Transverse colon (tissue), 4 donors: ENCODE measurements at regions of chr4 and their contacts with region 1.

Region 1: DNA sequence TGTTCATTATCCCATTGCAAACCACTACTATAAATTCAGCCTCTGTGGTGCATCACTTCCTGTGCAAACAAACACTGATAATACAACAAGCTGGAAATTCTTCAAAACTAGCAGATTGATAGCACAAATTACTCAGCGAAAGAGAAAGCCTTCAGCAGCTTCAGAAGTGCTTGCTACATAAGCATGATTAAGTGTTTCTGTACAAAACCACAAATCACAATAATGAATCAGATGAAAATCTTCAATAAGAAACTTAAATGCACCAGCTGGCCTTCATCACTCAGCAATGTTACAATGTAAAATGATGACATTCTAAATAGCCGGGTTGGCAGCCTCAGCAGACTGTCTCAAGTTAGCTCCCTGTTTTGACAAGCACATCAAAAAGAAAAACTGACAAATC is 262.2 kb downstream of the SPOCK3 start:
- DNase-seq: no peak
- H3K4me3 ChIP-seq: no peak overlapping the region
- H3K27ac ChIP-seq: no peak overlapping the region
- H3K4me1 ChIP-seq: no peaks in the 10 kb centered on the region
- H3K27me3 ChIP-seq: no peaks in the 10 kb centered on the region
- CTCF ChIP-seq: no peak
- EP300 ChIP-seq: no peak
- POLR2A ChIP-seq: no peak

Region 2: GRCh38 chr4:166994686-166995085 is 22.6 kb after region 1 on chr4:
- in situ Hi-C with region 1: no loop called
- intact Hi-C with region 1: loop called (anchors 1 kb)
- DNase-seq: no peak
- H3K4me3 ChIP-seq: no peak overlapping the region
- H3K27ac ChIP-seq: no peak overlapping the region
- H3K4me1 ChIP-seq: no peaks in the 10 kb centered on the region
- H3K27me3 ChIP-seq: no peaks in the 10 kb centered on the region
- CTCF ChIP-seq: no peak
- EP300 ChIP-seq: no peak
- POLR2A ChIP-seq: no peak